ENCODE measurements at regions of chr16 and their contacts with region 1.

Region 1: DNA sequence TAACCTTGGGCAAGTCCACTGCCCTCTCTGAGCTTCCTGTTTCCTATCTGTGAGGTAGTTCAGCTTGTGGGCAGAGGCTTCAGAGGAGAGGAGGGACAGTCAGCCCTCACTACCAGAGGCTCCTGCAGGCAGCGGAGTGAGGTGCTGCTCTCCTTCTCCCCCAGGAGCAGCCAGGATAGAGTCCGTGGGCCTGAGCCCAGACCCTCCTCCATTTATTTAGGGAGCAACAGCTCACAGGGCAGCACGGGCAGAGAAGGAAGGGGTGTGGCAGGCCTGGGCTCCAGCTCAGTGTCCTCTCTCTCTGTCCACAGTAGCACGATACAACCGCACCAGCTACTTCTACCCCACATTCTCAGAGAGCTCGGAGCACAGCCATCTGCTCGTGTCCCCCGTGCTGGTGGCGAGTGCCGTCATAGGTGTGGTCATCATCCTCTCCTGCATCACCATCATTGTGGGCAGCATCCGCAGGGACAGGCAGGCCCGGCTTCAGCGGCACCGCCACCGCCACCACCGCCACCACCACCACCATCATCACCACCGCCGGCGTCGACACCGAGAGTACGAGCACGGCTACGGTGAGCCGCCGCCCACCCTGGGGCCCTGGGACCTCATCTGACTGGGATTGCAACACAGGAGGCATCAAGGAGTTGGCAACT is 42.3 kb downstream of the BEAN1 start:
- DNase-seq: no peak
- ATAC-seq: no peak
- H3K4me3 ChIP-seq: no peak overlapping the region
- H3K27ac ChIP-seq: no peak overlapping the region
- H3K4me1 ChIP-seq: no peaks in the 10 kb centered on the region
- H3K27me3 ChIP-seq: no peaks in the 10 kb centered on the region
- CTCF ChIP-seq: no peak
- POLR2A ChIP-seq: no peak

Region 2: DNA sequence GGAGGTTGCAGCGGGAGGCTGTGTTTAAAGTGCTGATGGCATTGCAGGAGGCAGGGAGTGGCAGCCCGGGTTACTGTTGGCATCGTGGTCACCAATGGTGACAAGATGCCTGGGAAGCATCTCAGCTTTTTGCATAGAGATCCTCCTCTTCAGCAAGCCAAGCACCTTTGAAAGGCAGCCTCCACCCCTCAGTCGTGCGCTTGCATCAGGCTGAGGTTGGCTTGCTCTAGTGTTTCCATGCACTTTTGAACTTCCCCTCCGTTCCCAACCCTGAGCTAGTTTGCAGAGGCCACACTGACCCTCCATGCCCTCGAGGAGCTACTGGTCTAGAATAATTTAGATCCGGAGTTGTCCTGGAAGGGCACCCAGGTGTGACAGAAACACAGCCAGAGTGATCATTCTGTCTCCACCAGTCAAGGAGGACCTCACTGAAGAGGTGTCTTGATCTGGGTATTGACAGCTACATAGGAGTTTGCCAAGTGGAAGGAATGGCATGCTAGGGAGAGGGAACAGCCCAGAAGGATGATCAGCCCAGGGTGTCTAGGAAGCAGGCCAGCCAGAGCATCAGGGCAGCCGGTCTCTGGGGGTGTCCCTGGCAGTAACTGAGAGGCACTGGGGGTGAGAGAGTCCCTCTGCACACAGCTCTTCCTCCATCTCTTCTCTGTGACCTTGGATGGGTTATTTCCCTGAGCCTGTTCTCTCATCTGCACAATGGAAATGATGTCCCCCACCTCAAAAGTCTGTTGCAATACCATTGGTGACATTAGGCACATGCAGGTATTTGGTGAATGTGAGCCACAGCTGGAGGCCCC is 34.6 kb before region 1 on chr16:
- intact Hi-C with region 1: loop called in 1 of 10 experiments (anchors 5 kb)
- DNase-seq: no peak
- ATAC-seq: no peak
- H3K4me3 ChIP-seq: no peak overlapping the region
- H3K27ac ChIP-seq: no peak overlapping the region
- H3K4me1 ChIP-seq: peaks cover 0 to 4% (median 0%) of the 10 kb centered on the region in 12 donors
- H3K27me3 ChIP-seq: peaks cover 0 to 20% (median 0%) of the 10 kb centered on the region in 9 donors
- CTCF ChIP-seq: no peak
- POLR2A ChIP-seq: no peak

Measured in heart left ventricle (tissue), 16 donors.